Activated CD4-positive, alpha-beta T cell treated with anti-CD3 and anti-CD28 coated beads, Interleukin-2, amount 10 ng/mL, durations not matched to agents 24 days and 14 days (primary cell): ENCODE measurements at regions of chr4 and their contacts with region 1.

Region 1: DNA sequence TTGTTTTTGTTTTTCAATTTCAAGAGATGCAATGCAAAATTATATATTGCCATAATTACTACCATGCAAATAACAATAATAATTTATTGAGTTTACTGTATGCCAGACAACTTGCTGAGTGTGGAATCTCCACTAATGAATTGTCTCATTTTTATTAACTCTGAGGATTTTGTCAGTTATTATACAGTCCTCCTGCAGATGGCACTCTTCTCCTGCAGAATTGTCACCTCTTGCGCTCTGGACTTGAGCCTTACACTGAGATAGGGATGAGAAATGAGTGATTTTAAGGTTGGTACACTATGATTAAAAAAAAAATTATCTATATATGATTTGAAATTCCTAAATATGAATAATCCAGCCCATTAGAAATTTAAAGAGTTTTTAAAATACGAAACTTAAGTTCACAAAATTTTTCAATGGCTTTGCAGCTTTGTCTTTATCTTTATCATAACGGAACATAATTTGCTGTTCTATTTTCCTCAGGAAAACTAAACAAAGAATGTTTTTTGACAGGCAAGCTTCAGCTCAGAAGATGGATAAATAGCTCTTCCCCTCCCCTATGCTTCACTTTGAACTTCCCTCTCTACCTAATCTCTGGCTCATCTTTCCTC is 12.7 kb upstream of the PAQR3 start:
- DNase-seq: peak; percentile 77
- H3K4me3 Mint-ChIP-seq: no peak overlapping the region
- H3K27ac Mint-ChIP-seq: no peak overlapping the region
- H3K4me1 Mint-ChIP-seq: no peaks in the 10 kb centered on the region
- H3K27me3 Mint-ChIP-seq: peaks cover 48% of the 10 kb centered on the region

Region 2: GRCh38 chr4:79576429-79576753 is 624.4 kb after region 1 on chr4:
- intact Hi-C with region 1: loop called (anchors 10 kb)
- DNase-seq: no peak
- H3K4me3 Mint-ChIP-seq: no peak overlapping the region
- H3K27ac Mint-ChIP-seq: no peak overlapping the region
- H3K4me1 Mint-ChIP-seq: no peaks in the 10 kb centered on the region
- H3K27me3 Mint-ChIP-seq: peaks cover 8% of the 10 kb centered on the region

Region 3: DNA sequence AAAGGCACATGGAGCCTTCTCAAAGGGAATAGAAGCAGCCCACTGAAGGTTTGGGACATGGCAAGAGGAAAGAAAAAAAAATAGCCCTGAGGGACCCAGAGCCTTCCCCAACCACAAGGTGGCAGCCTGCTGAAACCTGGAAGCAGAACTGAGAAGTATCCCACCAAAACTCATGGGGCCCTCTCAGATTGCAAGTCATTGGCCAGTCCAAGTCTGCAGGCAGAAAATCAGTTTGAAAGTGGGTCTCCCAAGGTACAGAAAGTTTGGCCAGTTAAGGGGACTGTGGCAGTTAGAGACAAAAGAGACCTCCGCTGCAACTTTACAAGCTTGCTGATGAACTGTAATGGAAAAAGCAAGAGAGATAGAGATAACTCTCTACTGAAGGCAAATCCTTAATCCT is 965.3 kb after region 1 on chr4:
- intact Hi-C with region 1: loop called (anchors 10 kb)
- DNase-seq: peak; percentile 83
- H3K4me3 Mint-ChIP-seq: no peak overlapping the region
- H3K27ac Mint-ChIP-seq: no peak overlapping the region
- H3K4me1 Mint-ChIP-seq: peaks cover 12% of the 10 kb centered on the region
- H3K27me3 Mint-ChIP-seq: no peaks in the 10 kb centered on the region

Region 4: GRCh38 chr4:80215449-80216052 is 1263.6 kb after region 1 on chr4:
- intact Hi-C with region 1: loop called (anchors 1 kb)
- DNase-seq: no peak
- H3K4me3 Mint-ChIP-seq: no peak overlapping the region
- H3K27ac Mint-ChIP-seq: no peak overlapping the region
- H3K4me1 Mint-ChIP-seq: peaks cover 2% of the 10 kb centered on the region
- H3K27me3 Mint-ChIP-seq: peaks cover 53% of the 10 kb centered on the region